ENCODE measurements at regions of chr6 and their contacts with region 1.

Region 1: DNA sequence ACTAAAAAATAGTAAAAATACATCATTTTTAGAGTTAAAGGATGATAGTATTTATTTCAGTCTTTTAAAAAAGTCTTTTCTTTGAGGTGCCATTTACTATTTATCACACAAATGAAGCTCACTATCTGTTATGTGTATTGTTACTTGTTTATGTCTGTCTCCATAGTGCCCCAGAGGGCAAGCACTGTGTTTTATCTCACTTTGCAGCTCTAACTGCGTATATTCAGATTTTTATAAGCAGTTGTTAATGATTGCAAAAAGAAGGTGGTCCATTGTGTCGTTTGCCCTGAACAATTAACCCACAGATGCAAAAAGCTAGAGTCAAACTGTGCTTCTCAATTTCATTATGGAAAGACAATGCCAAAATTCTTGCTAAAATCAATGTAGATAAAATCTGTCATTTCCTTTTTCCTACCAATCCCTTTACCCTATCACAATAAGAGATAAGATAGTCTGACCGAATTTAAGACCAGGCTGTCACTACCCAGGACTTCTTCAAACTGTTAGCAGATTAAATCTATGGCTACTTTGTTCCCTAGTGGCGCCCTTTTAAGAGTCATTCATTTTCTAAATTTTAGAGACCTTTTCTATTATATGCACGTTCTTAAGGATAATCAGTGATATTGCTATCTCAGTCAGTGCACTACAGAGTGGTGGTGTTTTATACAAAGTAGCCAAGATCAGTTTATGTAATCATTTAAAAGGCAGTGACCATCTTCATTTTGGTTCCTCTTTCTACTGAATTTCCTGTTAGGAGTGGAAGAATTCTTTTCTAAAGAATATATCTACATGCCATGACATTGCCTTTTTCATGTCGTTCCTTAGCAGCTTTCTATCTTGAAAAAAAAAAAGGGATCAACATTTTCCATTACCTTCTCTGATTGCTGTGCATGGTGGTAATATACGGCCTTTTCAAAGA is 133.1 kb upstream of the PRDM1 start:
- DNase-seq: no peak

Region 2: GRCh38 chr6:105344881-105345370 is 608.1 kb before region 1 on chr6:
- intact Hi-C with region 1: loop called in 1 of 2 experiments (anchors 5 kb)
- DNase-seq: no peak

Region 3: DNA sequence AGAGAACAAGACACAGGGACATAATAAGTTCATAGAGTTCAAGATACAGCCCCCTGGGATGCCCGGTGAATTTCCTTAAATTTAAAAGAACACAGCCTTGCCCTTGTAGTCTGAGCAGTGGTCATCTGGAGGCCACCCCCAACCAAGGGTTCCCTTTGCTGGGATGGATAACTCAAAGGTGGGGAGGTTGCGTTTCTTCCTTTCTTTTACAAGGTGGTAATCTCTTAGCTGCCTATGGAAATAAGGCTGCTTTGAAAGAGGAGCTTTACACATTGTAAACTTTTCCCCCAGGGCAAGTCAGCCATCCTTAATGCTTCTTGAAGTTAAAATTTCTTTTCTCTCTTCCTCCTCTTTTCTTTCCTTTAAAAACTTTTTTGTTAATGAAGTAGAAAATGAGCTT is 61.9 kb after region 1 on chr6:
- intact Hi-C with region 1: no loop called
- DNase-seq: no peak

Region 4: GRCh38 chr6:106751501-106752252 is 798.6 kb after region 1 on chr6:
- intact Hi-C with region 1: no loop called
- DNase-seq: no peak

Measured in posterior vena cava (tissue), 2 donors.